ENCODE measurements at regions of chr1 and their contacts with region 1.

Region 1: GRCh38 chr1:92858564-92859399 is 26.9 kb downstream of the RPL5 start:
- DNase-seq: peak; percentile 59
- ATAC-seq: peak; percentile 90
- H3K4me3 ChIP-seq: no peak overlapping the region
- H3K27ac ChIP-seq: no peak overlapping the region
- H3K4me1 ChIP-seq: peaks cover 9% of the 10 kb centered on the region
- H3K27me3 ChIP-seq: no peaks in the 10 kb centered on the region
- CTCF ChIP-seq: peak; percentile 78 to 99 (median 96)
- EP300 ChIP-seq: no peak
- POLR2A ChIP-seq: no peak
- RAD21 ChIP-seq: peak; percentile 100

Region 2: DNA sequence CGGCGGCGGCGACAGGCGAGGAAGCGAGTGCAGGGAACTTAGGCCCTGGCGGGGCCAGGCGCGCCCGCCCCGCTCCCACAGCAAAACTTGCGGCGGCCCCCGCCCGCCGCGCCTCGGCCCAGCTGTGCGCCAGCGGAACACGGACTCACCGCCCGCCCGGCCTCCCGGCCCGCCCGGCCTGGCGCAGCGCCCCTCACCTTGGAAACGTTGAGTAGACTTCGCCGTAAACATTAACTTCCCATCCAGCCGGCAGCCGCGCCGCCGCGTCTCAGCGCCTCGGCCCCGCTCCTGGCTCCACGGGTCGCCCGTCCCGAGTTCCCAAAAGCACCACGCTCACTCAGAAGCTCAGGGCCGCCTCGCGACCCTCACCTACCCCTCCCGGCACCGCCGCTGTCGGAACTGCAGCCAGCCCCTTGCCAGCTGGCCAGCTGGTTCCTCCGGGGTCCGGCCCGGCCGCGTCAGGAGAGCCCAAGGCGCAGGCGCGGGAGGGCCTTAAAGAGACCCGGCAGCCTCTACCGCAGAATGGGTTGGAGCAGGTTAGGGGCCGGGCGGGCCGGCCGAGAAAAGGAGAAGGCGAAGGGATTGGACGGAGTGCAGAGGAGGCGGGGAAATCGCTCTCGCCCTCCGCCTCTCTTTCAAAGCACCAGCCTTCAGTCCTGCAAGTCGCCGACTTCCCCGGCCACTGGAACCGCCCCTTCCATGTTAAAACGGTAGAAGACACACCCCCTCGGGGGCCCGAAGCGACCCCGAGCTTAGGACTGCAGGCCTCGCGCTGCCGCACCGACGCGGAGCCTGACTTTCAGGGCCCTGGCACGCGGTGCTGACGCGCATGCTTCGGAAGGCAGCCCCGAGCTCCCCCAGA is 73.9 kb before region 1 on chr1 and contains the start of gene EVI5:
- CTCF ChIA-PET with region 1: no interaction called
- POLR2A ChIA-PET with region 1: no interaction called
- RAD21 ChIA-PET with region 1: no interaction called
- SMC1A ChIA-PET with region 1: no interaction called
- in situ Hi-C with region 1: no loop called
- intact Hi-C with region 1: no loop called
- DNase-seq: peak; percentile 48
- ATAC-seq: peak; percentile 97
- H3K4me3 ChIP-seq: peak within 1 kb of the TSS; percentile 88
- H3K27ac ChIP-seq: peak within 1 kb of the TSS; percentile 20
- H3K4me1 ChIP-seq: peaks cover 3% of the 10 kb centered on the region
- H3K27me3 ChIP-seq: no peaks in the 10 kb centered on the region; a peak in 1 of 4 replicates
- CTCF ChIP-seq: peak in 2 of 3 experiments; percentile 28 to 39; a peak in 1 of 6 replicates
- EP300 ChIP-seq: no peak
- POLR2A ChIP-seq: peak; percentile 79
- RAD21 ChIP-seq: no peak
- polyA plus RNA-seq, gene EVI5: 0.27 to 0.98 TPM

Region 3: DNA sequence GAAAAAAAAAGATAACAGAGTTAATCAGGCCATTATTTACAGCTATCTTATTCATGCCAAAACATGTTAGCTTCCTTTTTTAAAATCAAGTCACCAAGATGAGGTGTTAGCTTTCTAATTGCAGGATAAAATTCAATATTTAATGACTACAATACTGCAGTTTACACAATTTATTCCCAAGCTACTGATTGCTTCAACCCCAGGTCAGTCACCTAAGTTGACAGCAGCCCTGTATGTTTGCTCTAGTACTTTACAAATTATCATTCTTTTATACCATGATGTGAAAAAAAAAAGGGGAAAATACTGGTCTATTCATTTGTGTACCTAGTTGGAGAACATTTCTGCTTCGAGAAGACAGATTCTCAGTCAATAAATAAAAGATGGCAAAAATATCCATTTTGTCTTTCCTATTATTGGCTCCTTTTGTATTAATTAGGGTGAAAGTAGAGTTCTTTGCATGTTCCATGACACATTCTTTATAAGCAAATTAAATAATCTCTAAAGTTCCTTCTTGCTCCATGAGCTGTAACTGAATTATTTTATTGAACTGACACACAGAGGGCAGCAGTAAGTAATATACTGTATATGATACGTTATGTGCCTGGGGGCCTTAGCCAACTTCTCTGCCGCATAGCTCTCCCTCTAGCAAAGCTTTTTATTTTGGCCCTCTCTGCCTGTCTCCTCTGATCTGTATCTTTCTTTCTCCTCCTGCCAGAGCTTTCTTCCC is 54.5 kb after region 1 on chr1:
- CTCF ChIA-PET with region 1: interaction called, 8 read pairs
- POLR2A ChIA-PET with region 1: no interaction called
- RAD21 ChIA-PET with region 1: interaction called, 3 read pairs
- SMC1A ChIA-PET with region 1: interaction called, 14 read pairs
- in situ Hi-C with region 1: no loop called
- intact Hi-C with region 1: no loop called
- DNase-seq: no peak
- ATAC-seq: no peak
- H3K4me3 ChIP-seq: no peak overlapping the region
- H3K27ac ChIP-seq: no peak overlapping the region
- H3K4me1 ChIP-seq: no peaks in the 10 kb centered on the region
- H3K27me3 ChIP-seq: no peaks in the 10 kb centered on the region
- CTCF ChIP-seq: no peak
- EP300 ChIP-seq: no peak
- POLR2A ChIP-seq: no peak
- RAD21 ChIP-seq: no peak

Region 4: GRCh38 chr1:92951141-92951582 is 92.4 kb after region 1 on chr1:
- CTCF ChIA-PET with region 1: interaction called, 169 read pairs
- POLR2A ChIA-PET with region 1: interaction called, 3 read pairs
- RAD21 ChIA-PET with region 1: interaction called, 106 read pairs
- SMC1A ChIA-PET with region 1: interaction called, 179 read pairs
- in situ Hi-C with region 1: no loop called
- intact Hi-C with region 1: no loop called
- DNase-seq: peak; percentile 79
- ATAC-seq: peak; percentile 80
- H3K4me3 ChIP-seq: 0 out of 2 replicates have a peak overlapping the region, but pooled peaks have one; percentile 0
- H3K27ac ChIP-seq: peak overlapping the region; percentile 79
- H3K4me1 ChIP-seq: peaks cover 37% of the 10 kb centered on the region
- H3K27me3 ChIP-seq: no peaks in the 10 kb centered on the region
- CTCF ChIP-seq: peak in 2 of 3 experiments; percentile 21 to 31; a peak in 3 of 6 replicates
- EP300 ChIP-seq: no peak
- POLR2A ChIP-seq: no peak
- RAD21 ChIP-seq: peak; percentile 29

Region 5: DNA sequence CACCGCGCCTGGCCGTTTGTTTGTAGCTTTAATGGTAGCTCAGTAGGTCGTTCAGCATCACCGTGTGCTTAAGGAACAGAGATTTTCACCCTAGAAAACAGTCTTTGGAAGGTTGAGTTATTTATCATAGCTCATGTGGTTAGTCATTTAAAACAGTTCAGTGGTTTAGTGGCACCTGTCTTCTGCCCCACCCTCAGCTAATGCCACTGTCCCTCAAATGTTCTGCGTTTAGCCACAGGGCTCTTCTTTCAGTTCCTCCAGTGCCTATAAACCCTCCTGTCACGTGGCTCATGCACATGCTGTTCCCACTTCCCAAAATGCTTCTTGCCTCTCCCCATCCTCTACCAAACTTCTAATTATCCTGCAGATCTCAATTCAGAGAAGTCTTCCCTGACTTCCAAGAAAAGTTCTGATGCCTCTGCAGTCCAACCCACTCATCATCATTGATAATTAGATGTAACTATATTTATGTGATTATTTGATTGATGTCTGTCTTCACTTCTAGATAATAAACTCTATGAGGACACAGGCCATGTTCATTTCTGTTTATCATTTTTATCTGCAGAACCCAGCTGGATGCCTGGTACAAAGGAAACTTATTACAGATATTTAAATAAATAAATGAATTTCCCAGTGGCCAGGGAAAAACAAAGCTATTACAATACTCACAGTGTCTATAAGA is 116.9 kb after region 1 on chr1:
- CTCF ChIA-PET with region 1: interaction called, 11 read pairs
- POLR2A ChIA-PET with region 1: interaction called, 3 read pairs
- RAD21 ChIA-PET with region 1: interaction called, 21 read pairs
- SMC1A ChIA-PET with region 1: interaction called, 16 read pairs
- in situ Hi-C with region 1: no loop called
- intact Hi-C with region 1: no loop called
- DNase-seq: peak; percentile 97
- ATAC-seq: peak; percentile 76
- H3K4me3 ChIP-seq: 0 out of 2 replicates have a peak overlapping the region, but pooled peaks have one; percentile 58
- H3K27ac ChIP-seq: peak overlapping the region; percentile 89
- H3K4me1 ChIP-seq: peaks cover 50% of the 10 kb centered on the region
- H3K27me3 ChIP-seq: no peaks in the 10 kb centered on the region
- CTCF ChIP-seq: no peak
- EP300 ChIP-seq: peak; percentile 89 to 92
- POLR2A ChIP-seq: no peak
- RAD21 ChIP-seq: no peak

Region 6: DNA sequence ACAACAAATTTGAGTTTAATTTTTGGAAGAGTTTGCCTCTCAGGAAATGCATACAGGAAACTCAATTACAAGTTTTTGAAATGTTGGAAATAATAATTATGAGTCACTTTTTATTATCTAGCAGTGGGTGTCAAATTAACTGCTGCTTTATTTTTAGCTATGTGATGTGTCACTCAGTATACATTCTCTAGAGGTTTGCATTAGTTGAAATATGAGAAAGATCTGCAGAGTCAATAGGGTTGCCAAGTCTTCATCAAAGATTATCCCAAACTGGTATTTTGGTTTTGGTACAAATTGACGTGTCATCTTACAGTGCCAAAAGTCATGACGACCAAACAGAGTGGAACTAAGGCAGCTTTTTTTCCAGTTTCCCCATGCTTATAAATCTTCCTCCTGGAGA is 156.8 kb after region 1 on chr1:
- CTCF ChIA-PET with region 1: interaction called, 16 read pairs
- POLR2A ChIA-PET with region 1: no interaction called
- RAD21 ChIA-PET with region 1: no interaction called
- SMC1A ChIA-PET with region 1: interaction called, 8 read pairs
- in situ Hi-C with region 1: no loop called
- intact Hi-C with region 1: no loop called
- DNase-seq: no peak
- ATAC-seq: no peak
- H3K4me3 ChIP-seq: no peak overlapping the region
- H3K27ac ChIP-seq: no peak overlapping the region
- H3K4me1 ChIP-seq: peaks cover 21% of the 10 kb centered on the region
- H3K27me3 ChIP-seq: no peaks in the 10 kb centered on the region
- CTCF ChIP-seq: no peak
- EP300 ChIP-seq: no peak
- POLR2A ChIP-seq: no peak
- RAD21 ChIP-seq: no peak

Region 7: GRCh38 chr1:93078986-93079654 is 220.3 kb after region 1 on chr1 and contains the start of gene MTF2:
- CTCF ChIA-PET with region 1: no interaction called
- POLR2A ChIA-PET with region 1: no interaction called
- RAD21 ChIA-PET with region 1: no interaction called
- SMC1A ChIA-PET with region 1: no interaction called
- in situ Hi-C with region 1: no loop called
- intact Hi-C with region 1: no loop called
- DNase-seq: peak; percentile 84
- ATAC-seq: peak; percentile 84
- H3K4me3 ChIP-seq: peak within 1 kb of the TSS; percentile 96
- H3K27ac ChIP-seq: peak within 1 kb of the TSS; percentile 93
- H3K4me1 ChIP-seq: no peaks in the 10 kb centered on the region
- H3K27me3 ChIP-seq: no peaks in the 10 kb centered on the region
- CTCF ChIP-seq: 0 out of 6 replicates have a peak, but pooled peaks of 1 of the 3 experiments have one; percentile 1
- EP300 ChIP-seq: peak; percentile 42 to 48; a peak in 3 of 4 replicates
- POLR2A ChIP-seq: peak; percentile 97
- RAD21 ChIP-seq: no peak
- polyA plus RNA-seq, gene MTF2: 22.6 to 30.6 TPM